Astrocyte of the cerebellum (primary cell): ENCODE measurements at regions of chr10 and their contacts with region 1.

Region 1: DNA sequence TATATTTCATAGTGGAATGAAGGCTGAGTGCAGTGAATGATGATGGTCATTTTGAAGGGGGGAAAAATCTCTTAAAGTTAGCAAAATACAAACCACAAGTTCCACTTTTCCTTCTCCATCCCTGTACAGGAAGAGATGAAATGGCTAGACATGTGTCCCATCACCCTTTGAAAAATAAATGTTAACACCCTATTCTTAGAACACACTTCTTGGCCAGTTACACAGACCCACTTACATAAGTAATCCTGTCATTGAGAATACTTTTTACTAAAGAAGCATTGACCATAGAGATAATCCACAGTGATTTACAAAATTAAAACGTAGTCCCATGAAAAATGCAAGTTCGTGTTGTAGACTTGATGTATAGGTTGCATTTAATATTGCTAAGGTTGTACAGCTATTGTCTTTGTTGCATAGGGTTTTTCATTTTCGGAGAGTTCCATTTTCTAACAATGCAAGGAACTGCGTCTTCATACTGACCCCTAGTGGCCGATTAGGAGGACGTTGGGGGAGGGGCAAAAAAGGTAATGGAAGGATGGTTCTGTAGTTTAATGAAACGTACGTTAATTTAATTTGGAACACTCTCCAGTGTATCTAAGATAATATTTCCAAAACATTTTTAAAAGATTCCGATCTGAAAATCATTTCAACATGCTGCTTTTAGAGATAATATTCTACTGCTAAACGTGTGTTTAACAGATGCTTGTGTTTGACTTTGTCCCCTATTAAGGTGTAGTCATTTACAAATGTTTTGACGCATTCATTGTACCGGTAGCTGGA is 60.9 kb downstream of the ARMC3 start:
- DNase-seq: peak; percentile 43
- H3K4me3 ChIP-seq: no peak overlapping the region
- CTCF ChIP-seq: peak; percentile 85

Region 2: GRCh38 chr10:21989453-21990154 is 999.2 kb before region 1 on chr10:
- in situ Hi-C with region 1: loop called (anchors 25 kb)
- DNase-seq: peak; percentile 64
- H3K4me3 ChIP-seq: no peak overlapping the region
- CTCF ChIP-seq: peak; percentile 68

Region 3: DNA sequence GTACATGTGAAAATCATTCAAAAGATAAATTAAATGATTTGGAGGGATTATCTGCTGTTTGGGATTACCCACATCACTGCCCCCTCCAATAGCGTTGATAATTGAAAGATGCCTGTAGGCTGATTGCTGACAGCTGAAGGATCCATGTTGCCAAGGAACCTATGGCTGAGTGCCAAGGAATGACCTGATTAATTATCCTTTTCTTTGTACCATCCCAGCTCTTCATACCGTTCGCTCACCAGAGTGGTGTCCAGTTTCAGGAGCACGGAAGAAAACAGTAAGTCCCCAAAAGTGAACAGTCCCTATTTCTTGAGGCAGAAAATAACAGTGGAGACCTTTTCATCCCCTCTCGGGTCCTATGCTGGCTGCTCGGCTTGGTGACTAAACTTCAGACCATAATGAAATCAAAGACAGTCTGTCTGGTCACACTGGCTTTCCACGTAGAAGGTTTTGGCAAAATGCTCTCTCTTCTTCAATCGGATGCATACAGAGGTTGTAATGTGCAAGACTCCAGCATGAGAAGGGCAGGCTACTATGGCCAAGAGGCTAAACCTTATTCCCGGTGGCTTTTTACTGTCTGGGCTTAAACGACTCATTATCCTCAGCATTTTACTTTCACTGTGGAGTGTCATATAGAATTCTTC is 534.7 kb before region 1 on chr10:
- in situ Hi-C with region 1: loop called (anchors 25 kb)
- DNase-seq: no peak
- H3K4me3 ChIP-seq: no peak overlapping the region
- CTCF ChIP-seq: no peak

Region 4: DNA sequence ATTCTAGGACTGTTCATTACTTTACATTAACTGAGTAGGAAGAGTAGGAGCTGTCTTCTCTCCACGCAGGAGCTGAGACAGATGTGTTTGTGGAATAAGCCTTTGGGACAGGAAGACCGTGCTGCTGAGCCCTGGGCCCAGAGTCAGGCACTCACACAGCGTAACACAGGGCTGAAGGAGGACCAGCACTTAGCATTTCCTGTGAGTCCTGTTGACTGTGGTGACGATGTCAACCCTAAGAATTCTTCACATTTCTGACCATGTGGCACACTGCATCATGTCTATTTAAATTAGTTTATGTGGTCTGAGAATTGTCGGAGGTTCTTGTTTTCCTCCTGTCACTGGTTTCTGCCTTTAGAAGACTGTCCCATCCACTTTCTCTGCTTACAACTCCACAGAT is 391.6 kb before region 1 on chr10:
- in situ Hi-C with region 1: loop called (anchors 25 kb)
- DNase-seq: no peak
- H3K4me3 ChIP-seq: no peak overlapping the region
- CTCF ChIP-seq: no peak